Psoas muscle (tissue), 8 donors: ENCODE measurements at regions of chr1 and their contacts with region 1.

Region 1: GRCh38 chr1:172532700-172533509 is at the start of gene SUCO:
- DNase-seq: peak; percentile 100
- ATAC-seq: peak; percentile 95 to 97 (median 96)
- H3K4me3 ChIP-seq: peak within 1 kb of the TSS; percentile 80
- H3K27ac ChIP-seq: peak within 1 kb of the TSS; percentile 90
- H3K4me1 ChIP-seq: peaks cover 28% of the 10 kb centered on the region
- H3K27me3 ChIP-seq: no peaks in the 10 kb centered on the region
- CTCF ChIP-seq: no peak
- total RNA-seq, gene SUCO: 6.2 to 8.2 (median 7.0) TPM

Region 2: DNA sequence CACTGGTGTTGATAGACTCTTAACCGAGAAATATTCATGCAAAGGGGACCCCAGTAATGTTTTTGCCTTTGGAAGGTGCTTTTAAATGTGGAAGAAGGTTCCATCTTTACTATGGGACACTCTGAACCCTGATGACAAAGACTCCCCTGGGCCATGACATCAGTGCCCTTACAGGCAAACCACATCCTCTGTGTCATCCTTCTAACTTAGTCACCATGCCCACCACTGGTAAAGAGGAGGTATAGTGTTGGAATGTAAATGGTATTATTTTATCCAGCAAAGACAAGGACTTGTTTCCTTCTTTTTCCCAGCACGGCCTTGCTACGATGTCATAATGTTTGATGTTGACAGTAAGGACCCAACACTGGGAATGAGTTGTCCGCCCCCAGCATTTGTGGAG is 738.8 kb before region 1 on chr1:
- intact Hi-C with region 1: loop called in 1 of 2 experiments (anchors 10 kb)
- DNase-seq: no peak
- ATAC-seq: peak in 2 of 4 donors; percentile 58 to 64
- H3K4me3 ChIP-seq: no peak overlapping the region
- H3K27ac ChIP-seq: no peak overlapping the region
- H3K4me1 ChIP-seq: no peaks in the 10 kb centered on the region
- H3K27me3 ChIP-seq: no peaks in the 10 kb centered on the region
- CTCF ChIP-seq: no peak

Region 3: GRCh38 chr1:172449585-172450534 is 83.0 kb before region 1 on chr1:
- intact Hi-C with region 1: loop called (anchors 2 to 5 kb)
- DNase-seq: peak; percentile 54 to 65
- ATAC-seq: peak; percentile 41 to 77 (median 68)
- H3K4me3 ChIP-seq: peak overlapping the region; percentile 41
- H3K27ac ChIP-seq: no peak overlapping the region
- H3K4me1 ChIP-seq: peaks cover 19% of the 10 kb centered on the region
- H3K27me3 ChIP-seq: no peaks in the 10 kb centered on the region
- CTCF ChIP-seq: peak; percentile 65